OCI-LY7 (cell line): ENCODE measurements at regions of chr6 and their contacts with region 1.

Region 1: GRCh38 chr6:31158140-31158862 is at the start of gene TCF19:
- DNase-seq: peak; percentile 97
- H3K4me3 ChIP-seq: peak within 1 kb of the TSS; percentile 88
- H3K27ac ChIP-seq: peak within 1 kb of the TSS; percentile 60
- H3K4me1 ChIP-seq: peaks cover 22% of the 10 kb centered on the region
- CTCF ChIP-seq: no peak
- total RNA-seq, gene TCF19: 61.6 and 63.2 TPM in 2 replicates

Region 2: DNA sequence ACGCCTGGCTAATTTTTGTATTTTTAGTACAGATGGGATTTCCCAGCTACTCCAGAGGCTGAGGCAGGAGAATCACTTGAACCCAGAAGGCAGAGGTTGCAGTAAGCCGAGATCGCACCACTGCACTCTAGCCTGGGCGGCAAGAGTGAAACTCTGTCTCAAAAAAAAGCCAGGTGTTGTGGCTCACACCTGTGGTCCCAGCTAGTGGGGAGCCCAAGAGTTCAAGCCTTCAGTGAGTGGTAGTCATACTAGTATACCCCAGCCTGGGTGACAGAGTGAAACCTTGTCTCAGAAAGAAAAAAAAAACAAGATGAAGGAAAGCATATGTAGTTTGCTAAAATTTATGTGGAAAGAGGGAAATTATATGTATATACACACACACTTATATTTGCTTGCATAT is 32.2 kb after region 1 on chr6:
- CTCF ChIA-PET with region 1: no interaction called
- POLR2A ChIA-PET with region 1: no interaction called
- intact Hi-C with region 1: loop called (anchors 1 kb)
- DNase-seq: peak; percentile 85
- H3K4me3 ChIP-seq: no peak overlapping the region
- H3K27ac ChIP-seq: peak overlapping the region; percentile 39
- H3K4me1 ChIP-seq: peaks cover 46% of the 10 kb centered on the region
- CTCF ChIP-seq: no peak

Region 3: GRCh38 chr6:31568537-31568961 is 410.2 kb after region 1 on chr6:
- CTCF ChIA-PET with region 1: no interaction called
- POLR2A ChIA-PET with region 1: no interaction called
- intact Hi-C with region 1: no loop called
- DNase-seq: peak; percentile 76
- H3K4me3 ChIP-seq: peak overlapping the region; percentile 27
- H3K27ac ChIP-seq: peak overlapping the region; percentile 75
- H3K4me1 ChIP-seq: peaks cover 66% of the 10 kb centered on the region
- CTCF ChIP-seq: no peak